ENCODE measurements at regions of chr9 and their contacts with region 1.

Region 1: GRCh38 chr9:124415102-124415851 is at the start of gene PSMB7:
- DNase-seq: peak; percentile 98
- H3K4me3 Mint-ChIP-seq: peak within 1 kb of the TSS; percentile 95
- H3K27ac Mint-ChIP-seq: peak within 1 kb of the TSS; percentile 90
- H3K4me1 Mint-ChIP-seq: peaks cover 33% of the 10 kb centered on the region
- H3K27me3 Mint-ChIP-seq: peaks cover 4% of the 10 kb centered on the region

Region 2: DNA sequence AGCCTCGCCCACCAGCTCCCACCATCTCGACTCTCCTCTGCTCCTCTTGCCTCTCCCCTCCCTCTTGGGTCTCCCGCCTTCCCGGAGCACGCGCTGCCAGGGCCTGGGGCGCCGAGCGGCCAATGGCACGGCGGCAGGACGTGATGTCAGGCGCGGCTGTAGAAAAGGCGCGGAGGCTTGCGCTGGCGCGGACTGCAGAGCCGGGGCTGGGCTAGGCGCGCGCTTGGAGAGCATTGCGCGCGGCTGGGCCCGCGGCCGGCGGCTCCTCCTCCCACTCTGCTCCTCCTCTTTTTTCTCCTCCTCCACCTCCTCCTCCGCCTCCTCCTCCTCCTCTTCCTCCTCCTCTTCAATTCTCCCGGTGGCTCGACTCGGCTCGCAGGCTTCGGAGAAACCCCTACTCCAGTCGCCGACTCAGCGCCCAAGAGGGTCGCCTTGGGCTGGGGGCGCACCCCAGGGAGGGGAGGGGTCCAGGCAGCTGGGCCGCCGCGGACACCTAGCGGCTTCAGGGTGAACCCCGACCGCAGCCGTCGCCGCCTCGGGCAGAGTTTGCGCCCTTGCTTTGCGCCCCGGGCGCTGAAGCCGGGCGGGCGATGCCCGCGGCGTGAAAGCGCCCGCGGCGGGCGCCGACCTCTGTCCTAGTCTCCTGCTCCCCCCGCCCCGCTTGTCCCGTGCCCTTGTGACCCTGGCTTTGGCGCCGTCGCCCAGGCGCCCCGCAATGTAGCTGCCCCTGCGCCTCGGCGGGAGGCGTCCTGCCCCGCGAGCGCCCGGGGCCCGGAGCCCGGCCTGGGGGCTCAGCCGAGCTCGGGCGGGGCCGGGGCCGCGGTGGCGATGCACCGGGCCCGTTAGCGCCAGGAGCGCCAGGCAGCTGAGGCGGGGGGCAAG is 403.6 kb before region 1 on chr9 and contains the start of gene LHX2:
- CTCF ChIA-PET with region 1: no interaction called
- DNase-seq: no peak
- H3K4me3 Mint-ChIP-seq: no peak within 1 kb of the TSS
- H3K27ac Mint-ChIP-seq: no peak within 1 kb of the TSS
- H3K4me1 Mint-ChIP-seq: peaks cover 20% of the 10 kb centered on the region
- H3K27me3 Mint-ChIP-seq: peaks cover 100% of the 10 kb centered on the region

Region 3: GRCh38 chr9:124399968-124400940 is 15.0 kb before region 1 on chr9:
- CTCF ChIA-PET with region 1: interaction called, 11 read pairs
- DNase-seq: no peak
- H3K4me3 Mint-ChIP-seq: no peak overlapping the region
- H3K27ac Mint-ChIP-seq: no peak overlapping the region
- H3K4me1 Mint-ChIP-seq: no peaks in the 10 kb centered on the region
- H3K27me3 Mint-ChIP-seq: no peaks in the 10 kb centered on the region

Region 4: GRCh38 chr9:124480621-124480981 is 65.3 kb after region 1 on chr9:
- CTCF ChIA-PET with region 1: no interaction called
- DNase-seq: no peak
- H3K4me3 Mint-ChIP-seq: no peak overlapping the region
- H3K27ac Mint-ChIP-seq: no peak overlapping the region
- H3K4me1 Mint-ChIP-seq: no peaks in the 10 kb centered on the region
- H3K27me3 Mint-ChIP-seq: peaks cover 60% of the 10 kb centered on the region